ENCODE measurements at regions of chr12 and their contacts with region 1.

Region 1: GRCh38 chr12:122793685-122794106 is 19.3 kb downstream of the CCDC62 start:
- DNase-seq: no peak
- ATAC-seq: peak; percentile 67
- H3K4me3 Mint-ChIP-seq: no peak overlapping the region
- H3K27ac Mint-ChIP-seq: no peak overlapping the region
- H3K4me1 Mint-ChIP-seq: peaks cover 5% of the 10 kb centered on the region
- H3K27me3 Mint-ChIP-seq: no peaks in the 10 kb centered on the region
- CTCF ChIP-seq: peak; percentile 46

Region 2: GRCh38 chr12:122825773-122826724 is 32.4 kb after region 1 on chr12:
- CTCF ChIA-PET with region 1: interaction called, 18 read pairs
- POLR2A ChIA-PET with region 1: interaction called, 4 read pairs
- intact Hi-C with region 1: no loop called
- DNase-seq: no peak
- ATAC-seq: no peak
- H3K4me3 Mint-ChIP-seq: peak overlapping the region; percentile 71
- H3K27ac Mint-ChIP-seq: no peak overlapping the region
- H3K4me1 Mint-ChIP-seq: peaks cover 47% of the 10 kb centered on the region
- H3K27me3 Mint-ChIP-seq: no peaks in the 10 kb centered on the region
- CTCF ChIP-seq: no peak

Region 3: GRCh38 chr12:122840580-122841513 is 47.2 kb after region 1 on chr12:
- CTCF ChIA-PET with region 1: interaction called, 63 read pairs
- POLR2A ChIA-PET with region 1: interaction called, 23 read pairs
- intact Hi-C with region 1: loop called (anchors 1 kb)
- DNase-seq: no peak
- ATAC-seq: no peak
- H3K4me3 Mint-ChIP-seq: no peak overlapping the region
- H3K27ac Mint-ChIP-seq: peak overlapping the region; percentile 51
- H3K4me1 Mint-ChIP-seq: peaks cover 81% of the 10 kb centered on the region
- H3K27me3 Mint-ChIP-seq: no peaks in the 10 kb centered on the region
- CTCF ChIP-seq: no peak

Region 4: DNA sequence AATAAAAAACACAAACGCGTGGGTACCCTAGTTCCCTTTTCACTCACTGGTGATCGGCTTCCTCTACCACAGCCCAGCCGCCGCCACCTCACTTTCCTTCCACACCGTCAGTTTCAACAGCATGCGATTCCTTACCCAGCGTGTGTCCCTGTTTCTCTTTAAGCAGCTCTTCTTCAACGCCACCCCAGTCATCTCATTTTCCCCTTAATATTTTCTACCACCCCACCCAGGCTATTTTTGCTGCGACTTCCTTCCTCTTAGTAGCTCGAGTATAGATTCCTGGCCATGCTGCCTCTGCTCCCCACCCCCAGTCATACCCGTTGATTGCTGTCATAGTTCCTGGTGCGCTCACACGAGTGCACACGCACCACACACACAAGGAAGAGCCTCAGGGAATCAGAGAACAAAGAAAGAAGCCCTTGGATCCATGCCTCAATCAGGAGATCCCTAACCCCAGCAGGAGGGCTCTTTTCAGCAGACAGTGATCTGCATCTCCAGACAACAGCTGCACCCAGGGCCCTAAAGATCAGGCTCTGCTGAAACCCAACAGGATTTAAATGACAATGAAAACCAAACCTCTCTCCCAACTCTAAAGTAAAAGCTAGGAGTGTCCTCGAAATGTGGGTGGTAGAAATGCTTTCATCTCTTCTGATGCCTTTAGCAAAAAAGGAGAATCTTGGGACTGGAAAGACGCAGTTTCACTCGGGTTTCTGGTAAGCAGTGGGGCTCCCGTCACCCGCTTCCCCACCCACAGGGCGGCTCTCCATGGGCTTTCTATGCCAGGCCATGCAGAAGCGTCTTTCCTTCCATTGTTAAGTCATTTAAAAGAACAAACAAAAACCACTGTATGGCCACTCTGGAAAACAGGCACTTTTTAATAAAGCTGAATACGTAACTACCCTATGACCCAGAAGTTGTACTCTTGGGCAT is 78.4 kb after region 1 on chr12:
- CTCF ChIA-PET with region 1: interaction called, 17 read pairs
- POLR2A ChIA-PET with region 1: interaction called, 3 read pairs
- intact Hi-C with region 1: no loop called
- DNase-seq: peak; percentile 46
- ATAC-seq: peak; percentile 66
- H3K4me3 Mint-ChIP-seq: peak overlapping the region; percentile 84
- H3K27ac Mint-ChIP-seq: peak overlapping the region; percentile 93
- H3K4me1 Mint-ChIP-seq: peaks cover 91% of the 10 kb centered on the region
- H3K27me3 Mint-ChIP-seq: no peaks in the 10 kb centered on the region
- CTCF ChIP-seq: no peak

Region 5: GRCh38 chr12:122951979-122952892 is 158.5 kb after region 1 on chr12:
- CTCF ChIA-PET with region 1: interaction called, 39 read pairs
- POLR2A ChIA-PET with region 1: interaction called, 3 read pairs
- intact Hi-C with region 1: loop called (anchors 1 kb)
- DNase-seq: peak; percentile 60
- ATAC-seq: peak; percentile 96
- H3K4me3 Mint-ChIP-seq: no peak overlapping the region
- H3K27ac Mint-ChIP-seq: peak overlapping the region; percentile 18
- H3K4me1 Mint-ChIP-seq: peaks cover 24% of the 10 kb centered on the region
- H3K27me3 Mint-ChIP-seq: no peaks in the 10 kb centered on the region
- CTCF ChIP-seq: peak; percentile 79

Region 6: DNA sequence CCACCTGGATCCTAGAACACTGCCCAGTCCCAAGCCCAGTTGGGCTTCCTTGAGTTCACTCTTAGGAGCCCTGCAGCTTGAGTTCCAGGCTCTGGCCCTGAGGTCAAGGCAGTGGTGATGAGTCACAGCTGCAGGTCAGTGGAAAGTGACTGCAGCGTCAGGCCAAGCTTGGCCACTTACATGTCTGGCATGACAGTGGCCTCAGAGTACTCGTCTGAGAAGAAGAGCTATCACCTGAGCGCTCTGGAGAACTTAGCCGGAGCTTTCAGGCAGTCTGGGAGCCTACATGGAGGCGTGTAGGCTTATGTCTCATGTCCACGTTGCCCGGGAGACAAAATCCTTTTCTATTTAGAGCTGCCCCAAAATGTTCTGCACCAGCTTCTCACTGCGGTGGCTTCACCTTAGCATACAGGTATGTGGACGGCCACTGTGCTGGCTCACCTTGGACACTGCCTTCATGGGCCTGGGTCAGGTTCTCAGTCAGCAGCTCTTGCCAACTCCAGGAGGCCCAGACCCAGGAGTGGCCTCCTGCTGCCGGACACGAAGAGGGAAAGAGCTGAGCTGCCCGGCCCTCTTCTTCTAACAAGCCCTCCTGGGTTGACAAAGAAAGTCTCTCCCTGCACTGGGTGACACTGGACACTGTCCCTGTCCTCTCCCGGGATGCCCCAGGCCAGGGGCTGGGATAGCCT is 262.5 kb after region 1 on chr12:
- CTCF ChIA-PET with region 1: no interaction called
- POLR2A ChIA-PET with region 1: no interaction called
- intact Hi-C with region 1: no loop called
- DNase-seq: no peak
- ATAC-seq: no peak
- H3K4me3 Mint-ChIP-seq: no peak overlapping the region
- H3K27ac Mint-ChIP-seq: no peak overlapping the region
- H3K4me1 Mint-ChIP-seq: peaks cover 29% of the 10 kb centered on the region
- H3K27me3 Mint-ChIP-seq: no peaks in the 10 kb centered on the region
- CTCF ChIP-seq: no peak

Region 7: DNA sequence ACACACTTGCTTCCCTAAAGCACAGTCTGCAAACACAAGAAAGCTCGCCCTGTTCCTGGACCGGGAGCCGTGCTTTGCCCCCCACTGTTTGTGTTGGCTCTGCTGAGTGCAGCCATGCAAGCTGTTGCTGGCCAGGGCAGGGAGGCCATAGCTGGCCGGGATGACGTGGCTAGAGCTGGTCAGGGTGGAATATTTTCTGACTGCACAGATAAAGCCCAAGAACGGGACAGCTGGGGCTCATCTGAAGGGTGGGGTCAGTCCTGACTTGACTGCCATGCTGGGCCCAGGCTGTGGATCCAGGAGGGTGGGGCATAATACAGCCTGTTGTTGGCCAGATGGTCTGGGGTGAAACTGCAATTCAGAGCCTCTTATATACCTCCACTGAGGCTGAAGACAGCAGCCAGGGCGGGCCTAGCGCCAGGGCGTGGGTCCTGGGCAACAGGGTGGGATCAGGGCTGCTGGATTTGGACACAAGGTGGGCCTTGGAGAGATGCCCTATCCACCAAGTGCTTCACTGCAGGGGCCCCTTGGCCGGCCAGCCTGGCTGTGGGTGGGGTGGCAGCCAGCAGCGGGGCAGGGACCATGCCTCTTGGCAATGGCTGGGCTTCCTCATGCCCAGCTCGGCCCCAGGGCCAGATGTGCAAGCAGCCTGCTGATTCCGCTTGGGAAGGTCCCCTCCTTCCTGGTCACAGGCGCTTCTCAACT is 605.0 kb after region 1 on chr12:
- CTCF ChIA-PET with region 1: no interaction called
- POLR2A ChIA-PET with region 1: no interaction called
- intact Hi-C with region 1: no loop called
- DNase-seq: no peak
- ATAC-seq: no peak
- H3K4me3 Mint-ChIP-seq: no peak overlapping the region
- H3K27ac Mint-ChIP-seq: no peak overlapping the region
- H3K4me1 Mint-ChIP-seq: peaks cover 2% of the 10 kb centered on the region
- H3K27me3 Mint-ChIP-seq: no peaks in the 10 kb centered on the region
- CTCF ChIP-seq: no peak

Region 8: DNA sequence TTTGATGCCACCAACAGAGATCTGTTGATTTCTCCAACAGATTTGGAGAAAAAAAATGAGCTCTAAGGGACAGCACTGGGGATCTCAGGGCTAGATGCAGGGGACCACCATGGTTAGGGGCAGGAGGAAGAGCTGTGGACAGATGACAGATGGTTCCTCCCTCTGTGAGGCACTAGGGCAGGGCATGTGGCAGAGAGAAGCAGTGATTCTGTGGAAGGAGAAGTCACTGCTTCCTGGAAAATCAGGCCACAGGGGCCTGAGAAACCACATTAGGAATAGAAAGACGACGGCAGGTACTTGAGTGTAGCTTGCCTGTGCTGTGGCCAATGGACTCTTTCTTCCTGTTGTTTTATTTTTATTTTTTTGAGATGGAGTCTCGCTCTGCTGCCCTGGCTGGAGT is 765.8 kb after region 1 on chr12:
- CTCF ChIA-PET with region 1: no interaction called
- POLR2A ChIA-PET with region 1: no interaction called
- intact Hi-C with region 1: no loop called
- DNase-seq: no peak
- ATAC-seq: no peak
- H3K4me3 Mint-ChIP-seq: no peak overlapping the region
- H3K27ac Mint-ChIP-seq: no peak overlapping the region
- H3K4me1 Mint-ChIP-seq: no peaks in the 10 kb centered on the region
- H3K27me3 Mint-ChIP-seq: no peaks in the 10 kb centered on the region
- CTCF ChIP-seq: no peak